Lower leg skin (tissue), 4 donors: ENCODE measurements at regions of chr21 and their contacts with region 1.

Region 1: DNA sequence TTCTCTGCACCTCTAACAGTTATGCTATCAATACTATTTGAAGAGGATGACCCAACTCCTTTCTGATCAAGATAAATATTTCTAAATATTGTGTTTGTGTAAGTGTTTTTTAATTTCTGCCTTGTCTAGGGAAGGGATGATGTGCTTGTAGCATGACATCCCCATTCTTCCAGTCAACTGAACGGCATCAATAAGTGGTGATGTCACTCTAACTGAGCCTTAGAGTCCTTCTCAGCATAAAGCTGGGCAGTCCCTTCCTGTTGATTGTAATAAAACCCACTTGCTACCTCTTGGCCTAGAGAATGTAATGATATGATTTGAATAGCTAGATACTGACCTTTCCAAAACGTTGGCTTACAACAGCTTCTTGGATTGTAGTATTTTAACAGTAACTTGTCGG is 52.5 kb upstream of the KCNJ6 start:
- DNase-seq: no peak
- H3K4me3 ChIP-seq: no peak overlapping the region
- CTCF ChIP-seq: no peak
- POLR2A ChIP-seq: no peak

Region 2: GRCh38 chr21:38012701-38013100 is 44.0 kb after region 1 on chr21:
- intact Hi-C with region 1: loop called (anchors 1 kb)
- DNase-seq: no peak
- H3K4me3 ChIP-seq: no peak overlapping the region
- CTCF ChIP-seq: no peak
- POLR2A ChIP-seq: no peak